ENCODE measurements at regions of chr17 and their contacts with region 1.

Region 1: DNA sequence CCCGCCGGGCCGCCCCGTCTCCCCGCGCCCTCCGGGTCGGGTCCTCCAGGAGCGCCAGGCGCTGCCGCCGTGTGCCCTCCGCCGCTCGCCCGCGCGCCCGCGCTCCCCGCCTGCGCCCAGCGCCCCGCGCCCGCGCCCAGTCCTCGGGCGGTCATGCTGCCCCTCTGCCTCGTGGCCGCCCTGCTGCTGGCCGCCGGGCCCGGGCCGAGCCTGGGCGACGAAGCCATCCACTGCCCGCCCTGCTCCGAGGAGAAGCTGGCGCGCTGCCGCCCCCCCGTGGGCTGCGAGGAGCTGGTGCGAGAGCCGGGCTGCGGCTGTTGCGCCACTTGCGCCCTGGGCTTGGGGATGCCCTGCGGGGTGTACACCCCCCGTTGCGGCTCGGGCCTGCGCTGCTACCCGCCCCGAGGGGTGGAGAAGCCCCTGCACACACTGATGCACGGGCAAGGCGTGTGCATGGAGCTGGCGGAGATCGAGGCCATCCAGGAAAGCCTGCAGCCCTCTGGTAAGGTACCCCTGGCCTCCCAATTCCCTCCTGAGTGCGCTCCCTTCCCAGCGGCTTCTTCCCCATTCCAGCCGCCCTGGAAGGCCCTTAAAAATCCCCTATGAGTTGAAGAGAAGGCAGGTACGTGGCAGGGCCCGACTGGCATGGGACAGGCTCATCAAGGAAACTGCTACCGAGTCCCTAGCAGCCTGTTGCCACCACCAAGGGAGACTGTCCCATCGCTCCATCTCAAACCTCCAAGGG is 505 bp downstream of the IGFBP4 start:
- DNase-seq: peak; percentile 66
- H3K4me3 ChIP-seq: peak overlapping the region; percentile 49 to 52
- H3K27ac ChIP-seq: peak overlapping the region; percentile 84 to 93
- H3K4me1 ChIP-seq: peaks cover 3% of the 10 kb centered on the region
- H3K27me3 ChIP-seq: no peaks in the 10 kb centered on the region
- CTCF ChIP-seq: peak in 3 of 4 experiments; percentile 7 to 41 (median 18)
- POLR2A ChIP-seq: peak; percentile 7

Region 2: DNA sequence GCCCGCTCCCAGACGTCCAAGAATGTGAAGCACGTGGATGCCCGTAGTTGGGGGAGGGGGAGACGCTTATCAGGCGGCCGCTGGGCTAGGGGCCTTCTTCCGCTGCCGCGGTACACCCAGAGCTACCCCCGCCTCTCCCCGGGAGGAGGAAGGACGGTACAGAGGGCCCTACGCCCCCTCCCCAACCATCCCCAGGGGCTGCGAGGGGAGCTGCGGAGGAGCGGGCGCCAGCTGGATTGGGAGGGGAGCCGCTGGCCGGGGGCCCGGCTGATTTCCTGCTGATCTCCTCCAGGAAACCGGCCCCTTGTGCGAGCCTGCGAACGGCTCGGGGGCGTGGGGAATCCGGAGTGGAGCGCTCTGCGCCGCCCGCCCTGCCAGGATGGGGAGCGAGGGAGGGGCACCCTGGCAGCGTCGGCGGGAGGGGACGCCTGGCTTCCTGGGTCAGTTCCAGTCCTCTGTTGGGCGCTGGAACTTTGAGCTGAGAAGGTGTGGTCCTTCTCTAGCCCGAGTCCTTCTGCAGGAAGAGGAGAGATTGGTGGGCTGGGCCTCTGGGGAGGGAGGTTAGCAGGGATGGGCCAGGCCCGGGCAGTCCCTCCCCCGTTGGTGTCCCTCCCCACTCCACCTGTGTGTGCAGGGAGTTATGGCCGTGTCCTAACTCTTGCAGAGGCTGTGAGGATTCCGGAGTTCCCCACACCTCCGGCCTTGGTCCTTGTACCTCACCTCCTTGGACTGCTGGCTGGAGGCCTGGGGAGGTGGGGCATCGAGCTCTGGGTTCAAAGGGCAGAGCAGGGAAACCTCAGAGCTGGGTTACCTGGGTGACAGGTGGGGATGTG is 98.4 kb before region 1 on chr17:
- intact Hi-C with region 1: no loop called
- DNase-seq: peak; percentile 64
- H3K4me3 ChIP-seq: peak overlapping the region; percentile 36 to 93
- H3K27ac ChIP-seq: peak overlapping the region; percentile 96 to 98
- H3K4me1 ChIP-seq: peaks cover 49% of the 10 kb centered on the region
- H3K27me3 ChIP-seq: no peaks in the 10 kb centered on the region
- CTCF ChIP-seq: peak in 1 of 4 experiments; percentile 2
- POLR2A ChIP-seq: peak; percentile 79

Region 3: DNA sequence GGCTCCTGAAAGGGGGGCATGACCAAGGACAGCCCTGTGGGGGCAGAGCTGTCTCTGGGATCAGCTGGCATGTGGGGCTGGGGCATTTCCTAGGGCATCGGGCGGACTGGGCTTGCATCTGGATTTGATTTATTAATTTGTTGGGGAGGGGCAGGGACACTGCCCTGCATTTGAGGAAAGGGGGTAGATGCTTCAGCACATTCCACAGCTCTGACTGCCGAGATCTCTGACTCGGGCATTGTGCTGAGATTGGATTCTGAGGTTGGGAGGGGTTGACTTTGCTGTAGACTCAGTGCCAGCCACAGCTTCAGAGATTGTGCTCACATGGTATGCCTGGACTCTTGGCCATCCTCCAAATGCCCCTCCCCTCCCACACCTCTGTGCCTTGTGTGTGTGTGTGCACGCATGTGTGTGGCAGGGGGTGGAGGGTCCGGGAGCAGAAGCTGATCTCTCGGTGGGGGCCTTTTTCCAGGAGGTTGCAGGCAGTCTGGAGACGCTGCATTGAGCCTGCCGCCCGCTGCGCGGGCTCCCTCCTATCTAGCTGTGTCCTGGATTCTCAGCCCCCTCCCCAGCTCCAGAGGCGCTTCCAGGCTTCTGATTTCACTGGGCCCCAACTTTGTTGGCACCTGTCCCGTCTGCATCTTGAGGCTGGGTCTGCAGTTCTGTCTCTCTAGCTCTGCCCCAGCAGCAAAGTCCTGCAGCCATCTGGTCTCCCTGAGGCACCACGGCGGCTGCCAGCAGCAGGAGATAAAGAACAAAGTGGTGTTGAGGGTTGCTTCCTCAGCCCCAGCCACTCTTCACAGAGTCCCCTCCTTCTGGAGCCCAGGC is 14.4 kb after region 1 on chr17:
- intact Hi-C with region 1: no loop called
- DNase-seq: no peak
- H3K4me3 ChIP-seq: no peak overlapping the region
- H3K27ac ChIP-seq: no peak overlapping the region
- H3K4me1 ChIP-seq: no peaks in the 10 kb centered on the region
- H3K27me3 ChIP-seq: no peaks in the 10 kb centered on the region
- CTCF ChIP-seq: no peak
- POLR2A ChIP-seq: no peak

Region 4: GRCh38 chr17:40480501-40481003 is 36.8 kb after region 1 on chr17:
- intact Hi-C with region 1: loop called (anchors 1 kb)
- DNase-seq: no peak
- H3K4me3 ChIP-seq: no peak overlapping the region
- H3K27ac ChIP-seq: no peak overlapping the region
- H3K4me1 ChIP-seq: no peaks in the 10 kb centered on the region
- H3K27me3 ChIP-seq: no peaks in the 10 kb centered on the region
- CTCF ChIP-seq: no peak
- POLR2A ChIP-seq: no peak

Measured in prostate gland (tissue), 2 donors.